Ascending aorta (tissue), 2 donors: ENCODE measurements at regions of chr20 and their contacts with region 1.

Region 1: GRCh38 chr20:10291568-10292248 is 73.1 kb downstream of the SNAP25 start:
- DNase-seq: no peak
- H3K4me3 ChIP-seq: no peak overlapping the region
- H3K27ac ChIP-seq: no peak overlapping the region
- H3K4me1 ChIP-seq: peaks cover 0 to 4% of the 10 kb centered on the region in 2 donors
- H3K27me3 ChIP-seq: no peaks in the 10 kb centered on the region
- CTCF ChIP-seq: no peak

Region 2: GRCh38 chr20:10347086-10347880 is 55.6 kb after region 1 on chr20:
- intact Hi-C with region 1: loop called (anchors 5 kb)
- DNase-seq: no peak
- H3K4me3 ChIP-seq: no peak overlapping the region
- H3K27ac ChIP-seq: no peak overlapping the region
- H3K4me1 ChIP-seq: peaks cover 0 to under 1% of the 10 kb centered on the region in 2 donors
- H3K27me3 ChIP-seq: no peaks in the 10 kb centered on the region
- CTCF ChIP-seq: no peak